Common myeloid progenitor, CD34-positive (primary cell): ENCODE measurements at regions of chr4 and their contacts with region 1.

Region 1: DNA sequence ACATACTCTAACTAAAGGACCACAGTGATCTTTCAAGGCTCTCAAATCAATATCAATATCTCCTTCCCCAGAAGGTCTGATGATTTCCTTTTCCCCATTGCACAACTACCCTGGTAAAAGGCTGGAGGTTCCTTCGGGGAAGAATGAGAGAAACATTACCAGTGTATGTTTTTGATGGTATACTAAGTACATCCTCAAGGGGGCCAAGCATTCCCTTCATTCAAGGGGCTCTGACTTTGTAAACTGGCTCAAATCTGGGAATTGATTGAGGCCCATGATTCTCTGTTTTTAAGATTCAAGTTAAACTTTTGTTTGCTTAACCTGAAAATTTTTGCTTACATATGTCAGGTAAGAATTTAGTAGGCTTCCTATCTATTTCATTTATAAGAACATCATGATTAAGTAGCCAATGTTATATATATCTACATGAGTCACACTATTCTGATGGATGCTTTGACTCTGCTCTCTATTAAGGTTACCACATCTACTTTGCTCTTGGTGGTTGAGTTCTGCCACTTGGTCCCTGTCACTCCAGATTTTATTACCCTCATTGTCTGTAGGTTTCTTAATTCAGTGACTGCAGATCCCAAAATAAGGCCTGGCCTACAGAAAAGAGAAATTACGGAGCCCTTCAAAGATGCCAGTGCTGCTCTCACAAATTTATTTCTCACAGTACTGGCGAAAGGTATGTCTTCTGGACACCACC is 16.4 kb upstream of the GUCY1B1 start:
- DNase-seq: no peak
- H3K4me3 ChIP-seq: no peak overlapping the region
- H3K27ac ChIP-seq: no peak overlapping the region
- H3K4me1 ChIP-seq: no peaks in the 10 kb centered on the region
- H3K27me3 ChIP-seq: no peaks in the 10 kb centered on the region

Region 2: DNA sequence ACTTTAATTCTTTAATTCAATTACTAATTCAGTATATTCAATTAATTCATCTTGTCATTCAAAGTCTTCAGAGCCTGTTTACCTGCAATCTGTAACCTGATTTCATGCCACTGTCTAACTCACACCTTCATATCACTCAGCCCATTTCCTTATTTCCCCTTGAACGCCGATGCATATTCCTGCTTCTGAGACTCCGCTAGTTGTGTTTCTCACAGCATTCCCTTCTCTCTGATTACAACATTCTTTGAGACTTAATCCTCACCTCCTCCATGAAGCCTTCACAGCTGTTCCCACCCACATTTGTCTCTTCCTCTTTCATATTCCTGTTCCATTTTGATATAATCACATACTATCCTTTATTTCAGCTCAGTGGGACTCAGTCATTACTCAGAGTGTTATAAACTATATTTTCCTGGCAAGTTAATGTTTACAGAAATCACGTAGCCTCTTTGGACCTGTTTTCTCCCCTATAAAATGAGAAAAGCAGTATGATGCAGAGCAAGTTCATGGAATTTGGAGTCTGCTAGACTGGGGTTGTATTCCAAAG is 434.7 kb before region 1 on chr4:
- CTCF ChIA-PET with region 1: no interaction called
- POLR2A ChIA-PET with region 1: no interaction called
- DNase-seq: no peak
- H3K4me3 ChIP-seq: no peak overlapping the region
- H3K27ac ChIP-seq: no peak overlapping the region
- H3K4me1 ChIP-seq: no peaks in the 10 kb centered on the region
- H3K27me3 ChIP-seq: no peaks in the 10 kb centered on the region

Region 3: GRCh38 chr4:155762334-155762733 is 19.9 kb after region 1 on chr4:
- CTCF ChIA-PET with region 1: interaction called, 22 read pairs
- POLR2A ChIA-PET with region 1: no interaction called
- DNase-seq: no peak
- H3K4me3 ChIP-seq: peak overlapping the region in 1 of 7 experiments; percentile 49
- H3K27ac ChIP-seq: no peak overlapping the region
- H3K4me1 ChIP-seq: peaks cover 5 to 62% (median 17%) of the 10 kb centered on the region in 4 experiments
- H3K27me3 ChIP-seq: no peaks in the 10 kb centered on the region

Region 4: GRCh38 chr4:155809835-155810234 is 67.4 kb after region 1 on chr4:
- CTCF ChIA-PET with region 1: no interaction called
- POLR2A ChIA-PET with region 1: no interaction called
- DNase-seq: peak; percentile 75 to 86 (median 84)
- H3K4me3 ChIP-seq: no peak overlapping the region
- H3K27ac ChIP-seq: no peak overlapping the region
- H3K4me1 ChIP-seq: peaks cover 0 to 4% (median 0%) of the 10 kb centered on the region in 4 experiments
- H3K27me3 ChIP-seq: no peaks in the 10 kb centered on the region